Activated CD4-positive, alpha-beta memory T cell treated with anti-CD3 and anti-CD28 coated beads for 36 hours (primary cell): ENCODE measurements at regions of chr19 and their contacts with region 1.

Region 1: DNA sequence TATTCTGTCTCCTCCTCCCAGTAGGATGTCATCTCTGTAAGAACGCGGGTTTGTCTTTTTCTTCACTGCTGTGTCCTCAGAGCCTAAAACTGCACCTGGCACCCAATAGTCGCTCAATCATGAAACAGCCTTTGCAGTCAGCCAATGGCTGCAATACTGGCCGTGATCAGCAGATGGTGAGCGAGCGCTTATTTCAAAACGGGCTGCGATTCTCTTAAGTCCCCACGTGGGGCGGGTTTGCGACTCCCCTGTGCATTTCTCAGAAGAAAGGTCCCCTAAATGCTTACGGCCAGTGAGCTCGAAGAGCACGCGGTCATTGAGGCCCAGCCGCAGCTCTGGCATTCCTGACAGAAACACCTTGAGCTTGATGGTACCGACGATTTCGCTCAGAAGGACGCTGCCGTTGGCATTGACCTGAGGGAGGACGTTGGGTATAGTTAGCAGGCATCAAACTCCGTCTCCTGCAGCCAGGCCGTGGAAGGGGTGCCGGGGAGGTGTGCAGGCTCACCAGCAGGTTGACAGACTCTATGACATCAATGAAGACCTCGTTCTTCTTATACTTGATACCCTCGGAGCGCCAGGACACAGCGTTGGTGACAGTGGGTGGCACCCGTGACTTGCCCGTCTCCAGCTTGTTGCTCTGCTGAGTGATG is 6.0 kb downstream of the AP1M2 start:
- DNase-seq: peak; percentile 93
- H3K4me3 Mint-ChIP-seq: peak overlapping the region; percentile 38
- H3K27ac Mint-ChIP-seq: peak overlapping the region; percentile 52
- H3K4me1 Mint-ChIP-seq: peaks cover 4% of the 10 kb centered on the region
- H3K27me3 Mint-ChIP-seq: peaks cover 2% of the 10 kb centered on the region

Region 2: GRCh38 chr19:10424011-10424637 is 157.0 kb before region 1 on chr19:
- CTCF ChIA-PET with region 1: no interaction called
- POLR2A ChIA-PET with region 1: no interaction called
- intact Hi-C with region 1: no loop called
- DNase-seq: peak; percentile 80
- H3K4me3 Mint-ChIP-seq: peak overlapping the region; percentile 68
- H3K27ac Mint-ChIP-seq: no peak overlapping the region
- H3K4me1 Mint-ChIP-seq: peaks cover 78% of the 10 kb centered on the region
- H3K27me3 Mint-ChIP-seq: peaks cover 39% of the 10 kb centered on the region

Region 3: DNA sequence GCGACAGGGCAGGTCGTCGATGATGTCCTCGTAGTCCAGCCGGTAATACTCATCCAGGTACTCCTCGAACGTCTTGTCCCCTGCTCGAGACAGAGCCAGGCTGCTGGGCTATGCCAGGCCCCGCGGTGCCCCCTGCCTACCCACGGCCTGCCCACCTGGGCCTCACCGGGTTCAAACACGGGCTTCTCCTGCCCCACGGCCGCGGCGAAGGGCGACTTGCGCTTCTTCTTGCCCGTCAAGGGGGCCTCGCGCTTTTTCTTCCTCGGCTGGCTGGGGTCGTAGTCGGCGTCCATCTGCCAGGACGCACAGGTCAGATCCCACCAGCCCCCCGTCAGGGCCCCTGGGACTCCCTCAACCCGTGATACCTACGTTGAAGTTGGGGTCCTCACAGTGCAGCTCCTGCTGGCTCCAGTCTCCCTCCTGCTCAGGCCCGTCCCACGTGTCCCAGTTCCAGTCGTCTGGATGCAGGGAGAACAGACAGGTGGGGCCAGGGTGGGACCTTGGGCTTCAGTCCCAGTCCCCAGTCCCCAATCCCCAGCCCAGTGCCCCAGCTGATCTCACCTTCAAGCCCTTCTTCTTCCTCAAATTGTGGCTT is 23.4 kb before region 1 on chr19:
- CTCF ChIA-PET with region 1: no interaction called
- POLR2A ChIA-PET with region 1: no interaction called
- intact Hi-C with region 1: no loop called
- DNase-seq: no peak
- H3K4me3 Mint-ChIP-seq: no peak overlapping the region
- H3K27ac Mint-ChIP-seq: no peak overlapping the region
- H3K4me1 Mint-ChIP-seq: peaks cover 28% of the 10 kb centered on the region
- H3K27me3 Mint-ChIP-seq: no peaks in the 10 kb centered on the region

Region 4: GRCh38 chr19:10593820-10594637 is 12.9 kb after region 1 on chr19:
- CTCF ChIA-PET with region 1: interaction called, 33 read pairs
- POLR2A ChIA-PET with region 1: no interaction called
- intact Hi-C with region 1: no loop called
- DNase-seq: no peak
- H3K4me3 Mint-ChIP-seq: no peak overlapping the region
- H3K27ac Mint-ChIP-seq: no peak overlapping the region
- H3K4me1 Mint-ChIP-seq: peaks cover 18% of the 10 kb centered on the region
- H3K27me3 Mint-ChIP-seq: no peaks in the 10 kb centered on the region

Region 5: DNA sequence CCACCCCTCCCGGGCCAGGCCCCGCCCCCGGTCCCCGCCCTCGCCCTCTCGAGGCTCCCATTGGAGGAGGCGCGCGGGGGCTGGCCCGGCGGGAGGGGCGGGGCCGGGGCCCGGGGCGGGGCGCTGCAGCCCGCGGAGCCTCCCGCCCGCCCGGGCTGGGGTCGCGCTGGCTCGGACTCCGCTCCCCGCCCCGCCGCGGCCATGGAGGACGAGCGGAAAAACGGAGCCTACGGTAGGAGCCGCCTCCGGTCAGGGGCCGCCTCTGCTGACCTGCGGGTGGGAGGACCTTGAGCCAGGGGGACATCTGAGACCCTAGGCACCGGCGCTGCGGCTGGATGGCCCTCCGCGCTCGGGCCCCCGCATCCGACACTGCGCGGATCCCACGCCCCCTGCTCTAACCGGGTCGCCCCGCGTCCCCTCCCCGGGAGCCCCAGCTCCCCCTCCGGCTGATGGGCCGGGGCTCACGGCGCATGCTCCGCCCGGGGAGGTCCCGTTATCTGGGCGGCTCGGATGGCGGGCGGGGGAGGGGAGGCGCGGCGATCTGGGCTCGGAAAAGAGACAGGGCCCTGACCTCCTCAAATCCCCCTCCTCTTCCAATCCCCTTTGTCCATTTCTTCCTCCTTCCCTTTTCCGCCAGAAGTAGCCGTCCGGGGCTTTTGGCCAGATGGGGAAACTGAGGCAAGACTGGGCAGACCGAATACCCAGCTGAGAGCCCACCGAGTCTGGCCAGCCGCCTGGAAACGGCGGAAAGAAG is 21.4 kb after region 1 on chr19:
- CTCF ChIA-PET with region 1: interaction called, 41 read pairs
- POLR2A ChIA-PET with region 1: no interaction called
- intact Hi-C with region 1: no loop called
- DNase-seq: peak; percentile 94
- H3K4me3 Mint-ChIP-seq: peak overlapping the region; percentile 88
- H3K27ac Mint-ChIP-seq: peak overlapping the region; percentile 98
- H3K4me1 Mint-ChIP-seq: peaks cover 18% of the 10 kb centered on the region
- H3K27me3 Mint-ChIP-seq: no peaks in the 10 kb centered on the region

Region 6: GRCh38 chr19:10612491-10613119 is 31.5 kb after region 1 on chr19:
- CTCF ChIA-PET with region 1: interaction called, 11 read pairs
- POLR2A ChIA-PET with region 1: no interaction called
- intact Hi-C with region 1: no loop called
- DNase-seq: no peak
- H3K4me3 Mint-ChIP-seq: no peak overlapping the region
- H3K27ac Mint-ChIP-seq: no peak overlapping the region
- H3K4me1 Mint-ChIP-seq: peaks cover 24% of the 10 kb centered on the region
- H3K27me3 Mint-ChIP-seq: no peaks in the 10 kb centered on the region

Region 7: GRCh38 chr19:10625777-10626201 is 44.7 kb after region 1 on chr19:
- CTCF ChIA-PET with region 1: interaction called, 13 read pairs
- POLR2A ChIA-PET with region 1: no interaction called
- intact Hi-C with region 1: no loop called
- DNase-seq: no peak
- H3K4me3 Mint-ChIP-seq: no peak overlapping the region
- H3K27ac Mint-ChIP-seq: no peak overlapping the region
- H3K4me1 Mint-ChIP-seq: peaks cover 22% of the 10 kb centered on the region
- H3K27me3 Mint-ChIP-seq: no peaks in the 10 kb centered on the region

Region 8: DNA sequence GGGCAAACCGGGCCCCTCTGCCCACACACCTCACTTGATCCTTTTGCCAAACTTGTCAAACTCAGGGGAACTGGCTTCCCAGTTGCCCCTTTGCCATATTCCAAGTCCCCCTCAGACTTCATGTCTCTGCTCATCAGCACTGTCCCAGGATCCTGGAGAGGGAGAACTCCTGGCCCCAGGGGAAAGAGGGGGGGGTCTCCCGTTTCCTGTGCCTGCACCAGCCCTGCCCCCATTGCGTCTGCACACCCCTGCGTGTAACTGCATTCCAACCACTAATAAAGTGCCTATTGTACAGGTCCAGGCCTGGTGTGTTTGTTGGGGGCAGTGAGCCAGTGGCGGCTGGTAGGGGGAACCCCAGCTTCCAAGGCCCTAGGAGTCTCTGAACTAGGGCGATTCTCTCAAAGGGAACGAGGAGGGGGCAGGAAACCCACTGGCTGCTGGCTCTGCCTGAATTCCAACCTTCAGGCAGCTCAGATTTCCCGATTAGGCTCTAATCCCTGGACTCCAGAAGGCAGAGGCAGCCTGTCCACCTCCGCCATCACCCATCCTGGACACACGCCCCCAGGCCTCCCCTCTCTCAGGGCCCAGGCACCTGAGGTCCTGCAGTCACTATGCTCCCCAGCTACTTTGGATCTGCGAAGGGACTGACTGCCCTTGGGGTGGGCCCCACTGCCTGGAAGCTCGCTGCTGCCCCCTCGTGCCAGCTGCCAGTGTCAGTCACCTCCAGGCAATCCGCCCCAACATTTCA is 63.3 kb after region 1 on chr19:
- CTCF ChIA-PET with region 1: interaction called, 293 read pairs
- POLR2A ChIA-PET with region 1: interaction called, 7 read pairs
- intact Hi-C with region 1: loop called (anchors 1 kb)
- DNase-seq: peak; percentile 88
- H3K4me3 Mint-ChIP-seq: no peak overlapping the region
- H3K27ac Mint-ChIP-seq: peak overlapping the region; percentile 59
- H3K4me1 Mint-ChIP-seq: peaks cover 11% of the 10 kb centered on the region
- H3K27me3 Mint-ChIP-seq: no peaks in the 10 kb centered on the region

Region 9: GRCh38 chr19:10660346-10660745 is 79.2 kb after region 1 on chr19:
- CTCF ChIA-PET with region 1: interaction called, 15 read pairs
- POLR2A ChIA-PET with region 1: no interaction called
- intact Hi-C with region 1: no loop called
- DNase-seq: no peak
- H3K4me3 Mint-ChIP-seq: no peak overlapping the region
- H3K27ac Mint-ChIP-seq: no peak overlapping the region
- H3K4me1 Mint-ChIP-seq: peaks cover 60% of the 10 kb centered on the region
- H3K27me3 Mint-ChIP-seq: no peaks in the 10 kb centered on the region

Region 10: DNA sequence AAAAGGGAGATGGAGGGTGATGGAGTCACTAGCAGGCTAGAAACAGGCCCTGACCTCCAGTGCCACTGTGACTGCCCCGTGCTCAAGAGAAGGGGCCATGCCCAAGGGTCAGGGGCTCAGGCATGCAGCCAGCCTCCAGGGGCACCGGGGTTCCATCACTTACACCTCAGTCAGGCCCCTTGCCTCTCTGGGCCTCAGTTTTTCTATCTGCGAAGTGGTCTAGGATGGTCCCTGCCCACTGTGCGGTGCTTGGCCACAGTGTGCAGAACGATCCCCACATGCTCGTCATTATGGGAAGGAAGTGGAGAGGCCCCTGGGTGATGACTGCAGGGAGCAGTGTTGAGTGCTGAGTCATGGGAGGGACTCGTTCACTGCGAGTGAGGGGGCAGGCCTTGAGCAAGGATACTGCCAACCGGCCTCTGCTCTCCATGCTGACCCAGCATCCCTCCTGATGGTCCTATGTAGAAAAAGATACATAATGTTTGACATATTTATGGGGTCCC is 231.8 kb after region 1 on chr19:
- CTCF ChIA-PET with region 1: no interaction called
- POLR2A ChIA-PET with region 1: no interaction called
- intact Hi-C with region 1: no loop called
- DNase-seq: peak; percentile 76
- H3K4me3 Mint-ChIP-seq: no peak overlapping the region
- H3K27ac Mint-ChIP-seq: peak overlapping the region; percentile 90
- H3K4me1 Mint-ChIP-seq: peaks cover 30% of the 10 kb centered on the region
- H3K27me3 Mint-ChIP-seq: no peaks in the 10 kb centered on the region